ENCODE measurements at regions of chr2 and their contacts with region 1.

Region 1: GRCh38 chr2:206556357-206556949 is 85.8 kb upstream of the FAM237A start:
- DNase-seq: no peak
- H3K4me3 ChIP-seq: no peak overlapping the region
- CTCF ChIP-seq: peak; percentile 33

Region 2: DNA sequence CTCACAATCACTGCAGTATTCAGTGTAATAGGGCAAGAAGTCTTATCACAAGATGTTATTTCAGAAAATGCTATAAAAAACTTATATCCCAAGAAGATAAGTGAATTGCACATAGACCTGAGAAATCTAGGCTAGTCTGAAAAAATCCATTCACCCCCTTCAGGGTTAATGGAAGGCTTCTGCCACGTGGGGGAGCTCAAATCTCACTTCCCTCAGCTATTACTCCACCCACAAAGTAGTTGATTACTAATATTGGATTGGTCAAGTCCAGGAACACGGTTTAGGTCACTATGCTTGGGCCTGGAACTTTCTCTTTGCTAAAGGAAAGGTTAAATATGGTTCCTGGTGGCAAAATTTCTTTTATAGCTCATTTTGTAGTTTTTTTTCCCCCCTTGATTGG is 164.3 kb before region 1 on chr2:
- CTCF ChIA-PET with region 1: interaction called, 45 read pairs
- POLR2A ChIA-PET with region 1: interaction called, 3 read pairs
- DNase-seq: no peak
- H3K4me3 ChIP-seq: no peak overlapping the region
- CTCF ChIP-seq: peak; percentile 46

Region 3: GRCh38 chr2:206428783-206429182 is 127.7 kb before region 1 on chr2:
- CTCF ChIA-PET with region 1: no interaction called
- POLR2A ChIA-PET with region 1: no interaction called
- DNase-seq: no peak
- H3K4me3 ChIP-seq: no peak overlapping the region
- CTCF ChIP-seq: no peak

Region 4: DNA sequence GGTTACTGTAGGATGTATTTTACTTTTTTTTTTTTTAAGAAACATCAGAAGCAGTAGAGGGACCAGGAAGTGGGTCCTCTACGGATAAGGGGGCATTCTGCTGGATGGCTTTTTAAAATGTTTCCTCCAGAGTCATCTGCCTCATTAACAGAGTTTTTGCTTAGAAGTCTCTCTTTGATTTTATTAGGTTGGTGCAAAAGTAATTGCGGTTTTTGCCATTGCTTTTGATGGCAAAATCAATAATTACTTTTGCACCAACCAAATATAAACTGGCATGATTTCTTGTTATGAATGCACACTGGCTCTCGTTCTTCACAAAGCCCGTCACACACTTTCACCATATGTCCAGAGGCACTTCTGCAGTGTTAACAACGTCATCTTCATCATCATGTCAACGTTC is 17.3 kb after region 1 on chr2:
- CTCF ChIA-PET with region 1: interaction called, 10 read pairs
- POLR2A ChIA-PET with region 1: no interaction called
- DNase-seq: no peak
- H3K4me3 ChIP-seq: no peak overlapping the region
- CTCF ChIP-seq: no peak

Measured in AG04449 (cell line).